Dendritic cell treated with granulocyte-macrophage colony-stimulating factor and Interleukin-4, amounts not matched to agents 40 ng/mL and 50 ng/mL, for 4 days (primary cell): ENCODE measurements at regions of chr6 and their contacts with region 1.

Region 1: DNA sequence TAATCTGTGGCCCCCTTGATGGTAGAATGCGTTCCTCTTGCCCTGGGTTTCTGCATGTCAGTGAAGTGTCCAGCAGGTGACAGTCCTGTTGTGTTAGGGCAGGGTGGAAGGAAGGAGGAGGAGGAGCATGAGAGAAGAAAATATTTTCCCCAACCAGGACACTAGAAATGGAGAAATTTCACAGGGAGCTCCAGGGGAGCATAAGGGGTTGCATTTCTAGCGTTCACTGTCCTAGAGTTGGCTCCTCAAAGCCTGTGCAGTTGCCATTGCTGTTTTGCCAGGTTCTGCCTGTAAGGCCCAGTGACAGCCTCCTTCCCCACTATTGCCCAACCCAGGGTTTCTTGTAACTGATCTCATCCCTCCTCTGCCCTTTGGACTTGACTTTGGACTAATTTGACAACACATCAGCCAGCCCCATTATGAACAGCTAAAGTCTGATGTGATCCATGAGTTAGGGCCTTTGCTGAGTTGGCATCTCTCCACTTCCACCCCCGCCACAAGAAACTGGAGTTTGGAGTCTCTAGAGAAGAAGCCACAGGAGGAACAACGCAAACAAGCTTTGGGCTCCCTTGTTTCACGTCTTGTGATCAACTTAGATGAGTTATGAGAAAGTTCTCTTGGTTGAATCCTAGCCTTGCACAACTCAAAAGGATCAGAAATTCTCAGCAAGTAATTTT is 14.0 kb upstream of the FAM50B start:
- H3K4me3 Mint-ChIP-seq: no peak overlapping the region
- H3K27ac Mint-ChIP-seq: peak overlapping the region; percentile 68
- H3K4me1 Mint-ChIP-seq: peaks cover 32% of the 10 kb centered on the region
- H3K27me3 Mint-ChIP-seq: no peaks in the 10 kb centered on the region

Region 2: DNA sequence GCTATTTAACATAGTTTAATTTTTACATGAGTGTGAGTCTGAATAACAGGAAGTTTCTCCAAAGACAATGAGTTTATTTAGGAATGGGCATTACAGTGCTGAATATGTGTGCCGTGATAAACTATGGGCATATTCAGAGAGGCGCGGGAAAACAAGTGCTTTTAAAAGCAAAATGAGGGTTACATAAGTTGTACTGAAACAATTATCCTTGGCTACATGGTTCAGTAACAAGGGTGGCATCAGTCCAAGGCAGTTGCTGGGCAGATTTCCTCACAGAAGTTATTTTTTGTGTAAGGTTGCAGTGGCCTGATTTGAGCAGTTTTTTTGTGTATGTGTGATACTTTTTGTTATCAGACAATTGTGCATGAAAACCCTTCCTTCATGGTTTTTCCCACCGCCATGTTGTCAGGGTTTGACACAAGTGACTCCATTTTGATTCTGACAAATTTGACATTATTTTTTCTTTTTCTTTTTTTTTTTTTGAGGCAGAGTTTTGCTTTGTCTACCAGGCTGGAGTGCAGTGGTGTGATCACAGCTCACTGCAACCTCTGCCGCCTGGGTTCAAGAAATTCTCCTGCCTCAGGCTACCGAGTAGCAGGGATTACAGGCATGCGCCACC is 61.4 kb before region 1 on chr6:
- intact Hi-C with region 1: loop called (anchors 5 kb)
- H3K4me3 Mint-ChIP-seq: no peak overlapping the region
- H3K27ac Mint-ChIP-seq: no peak overlapping the region
- H3K4me1 Mint-ChIP-seq: peaks cover 20% of the 10 kb centered on the region
- H3K27me3 Mint-ChIP-seq: peaks cover 13% of the 10 kb centered on the region